CD4-positive, alpha-beta T cell (primary cell): ENCODE measurements at regions of chr3 and their contacts with region 1.

Region 1: GRCh38 chr3:49093853-49094767 is at the start of gene QRICH1:
- DNase-seq: peak; percentile 91 to 98 (median 94)
- ATAC-seq: peak; percentile 76
- H3K4me3 ChIP-seq: peak within 1 kb of the TSS; percentile 87
- H3K4me3 Mint-ChIP-seq: peak within 1 kb of the TSS; percentile 96
- H3K27ac ChIP-seq: peak within 1 kb of the TSS; percentile 74 to 93
- H3K27ac Mint-ChIP-seq: peak within 1 kb of the TSS; percentile 95
- H3K4me1 ChIP-seq: peaks cover 43% of the 10 kb centered on the region
- H3K4me1 Mint-ChIP-seq: peaks cover 46% of the 10 kb centered on the region
- H3K27me3 ChIP-seq: no peaks in the 10 kb centered on the region
- H3K27me3 Mint-ChIP-seq: no peaks in the 10 kb centered on the region
- CTCF ChIP-seq: peak; percentile 57
- total RNA-seq, gene QRICH1: 210 to 255 TPM

Region 2: GRCh38 chr3:48989796-48990635 is 104.1 kb before region 1 on chr3 and contains the start of gene P4HTM:
- CTCF ChIA-PET with region 1: interaction called, 28 read pairs
- POLR2A ChIA-PET with region 1: interaction called, 56 read pairs
- intact Hi-C with region 1: loop called (anchors 1 to 2 kb)
- DNase-seq: peak; percentile 45 to 88 (median 73)
- ATAC-seq: peak; percentile 60
- H3K4me3 ChIP-seq: peak within 1 kb of the TSS; percentile 81
- H3K4me3 Mint-ChIP-seq: peak within 1 kb of the TSS; percentile 96
- H3K27ac ChIP-seq: peak within 1 kb of the TSS; percentile 71 to 72
- H3K27ac Mint-ChIP-seq: peak within 1 kb of the TSS; percentile 94
- H3K4me1 ChIP-seq: peaks cover 48% of the 10 kb centered on the region
- H3K4me1 Mint-ChIP-seq: peaks cover 40% of the 10 kb centered on the region
- H3K27me3 ChIP-seq: no peaks in the 10 kb centered on the region
- H3K27me3 Mint-ChIP-seq: no peaks in the 10 kb centered on the region
- CTCF ChIP-seq: peak; percentile 39
- total RNA-seq, gene P4HTM: 45.9 to 47.0 TPM

Region 3: GRCh38 chr3:49028673-49029562 is 65.2 kb before region 1 on chr3 and contains the start of gene IMPDH2:
- CTCF ChIA-PET with region 1: interaction called, 8 read pairs
- POLR2A ChIA-PET with region 1: interaction called, 42 read pairs
- intact Hi-C with region 1: loop called (anchors 2 to 5 kb)
- DNase-seq: peak; percentile 86 to 98 (median 92)
- ATAC-seq: peak; percentile 96
- H3K4me3 ChIP-seq: peak within 1 kb of the TSS; percentile 82
- H3K4me3 Mint-ChIP-seq: peak within 1 kb of the TSS; percentile 88
- H3K27ac ChIP-seq: peak within 1 kb of the TSS; percentile 87 to 94
- H3K27ac Mint-ChIP-seq: peak within 1 kb of the TSS; percentile 93
- H3K4me1 ChIP-seq: peaks cover 36% of the 10 kb centered on the region
- H3K4me1 Mint-ChIP-seq: peaks cover 31% of the 10 kb centered on the region
- H3K27me3 ChIP-seq: no peaks in the 10 kb centered on the region
- H3K27me3 Mint-ChIP-seq: no peaks in the 10 kb centered on the region
- CTCF ChIP-seq: no peak
- total RNA-seq, gene IMPDH2: 133 to 135 TPM

Region 4: DNA sequence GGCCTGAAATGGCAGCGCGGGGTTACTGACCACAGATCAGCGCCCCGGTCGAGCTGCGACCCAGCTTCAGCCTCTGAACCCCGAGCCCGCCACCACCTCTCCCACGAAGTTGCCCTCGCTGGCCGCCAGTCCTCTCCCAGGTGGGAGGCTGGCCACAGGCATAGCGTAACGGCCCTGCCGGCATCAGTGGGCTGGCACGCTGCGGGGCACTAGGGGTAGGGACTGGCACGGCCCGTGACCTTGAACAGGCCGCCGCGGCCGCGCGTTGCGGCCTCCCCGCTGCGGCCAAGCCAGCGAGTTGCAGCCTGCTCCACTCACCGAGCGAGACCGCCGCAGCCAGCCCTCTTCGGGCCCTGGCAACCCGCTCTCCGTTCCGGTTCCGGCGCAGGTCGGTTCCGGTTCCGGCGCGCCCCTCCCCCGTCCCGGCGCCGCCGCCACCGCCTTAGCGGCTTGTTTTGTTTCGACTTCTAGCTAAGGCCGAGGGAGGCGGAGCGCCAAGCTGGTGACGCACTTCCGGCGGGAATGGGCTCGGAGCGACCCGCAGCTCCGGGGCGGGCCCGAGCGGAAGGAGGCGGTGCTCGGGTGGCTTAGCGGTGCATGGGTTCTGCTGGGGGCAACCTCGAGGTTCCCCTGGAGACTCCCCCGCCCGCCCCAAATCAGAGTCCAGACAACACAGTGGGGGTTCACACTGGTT is 26.5 kb after region 1 on chr3 and contains the start of gene USP19:
- CTCF ChIA-PET with region 1: interaction called, 27 read pairs
- POLR2A ChIA-PET with region 1: interaction called, 92 read pairs
- intact Hi-C with region 1: loop called in 1 of 2 experiments (anchors 2 kb)
- DNase-seq: peak; percentile 86 to 98 (median 94)
- ATAC-seq: peak; percentile 91
- H3K4me3 ChIP-seq: peak within 1 kb of the TSS; percentile 99
- H3K4me3 Mint-ChIP-seq: peak within 1 kb of the TSS; percentile 93
- H3K27ac ChIP-seq: peak within 1 kb of the TSS; percentile 87 to 95
- H3K27ac Mint-ChIP-seq: peak within 1 kb of the TSS; percentile 95
- H3K4me1 ChIP-seq: peaks cover 30% of the 10 kb centered on the region
- H3K4me1 Mint-ChIP-seq: peaks cover 23% of the 10 kb centered on the region
- H3K27me3 ChIP-seq: no peaks in the 10 kb centered on the region
- H3K27me3 Mint-ChIP-seq: no peaks in the 10 kb centered on the region
- CTCF ChIP-seq: no peak
- total RNA-seq, gene USP19: 84.9 to 86.2 TPM

Region 5: GRCh38 chr3:49171119-49171774 is 77.1 kb after region 1 on chr3 and contains the start of gene KLHDC8B:
- CTCF ChIA-PET with region 1: interaction called, 6 read pairs
- POLR2A ChIA-PET with region 1: interaction called, 20 read pairs
- intact Hi-C with region 1: loop called in 1 of 2 experiments (anchors 1 kb)
- DNase-seq: peak; percentile 66 to 87 (median 77)
- ATAC-seq: peak; percentile 84
- H3K4me3 ChIP-seq: peak within 1 kb of the TSS; percentile 80
- H3K4me3 Mint-ChIP-seq: peak within 1 kb of the TSS; percentile 89
- H3K27ac ChIP-seq: no peak within 1 kb of the TSS
- H3K27ac Mint-ChIP-seq: peak within 1 kb of the TSS; percentile 78
- H3K4me1 ChIP-seq: peaks cover 34% of the 10 kb centered on the region
- H3K4me1 Mint-ChIP-seq: peaks cover 33% of the 10 kb centered on the region
- H3K27me3 ChIP-seq: no peaks in the 10 kb centered on the region
- H3K27me3 Mint-ChIP-seq: no peaks in the 10 kb centered on the region
- CTCF ChIP-seq: peak; percentile 87
- total RNA-seq, gene KLHDC8B: 1.2 to 1.6 TPM

Region 6: DNA sequence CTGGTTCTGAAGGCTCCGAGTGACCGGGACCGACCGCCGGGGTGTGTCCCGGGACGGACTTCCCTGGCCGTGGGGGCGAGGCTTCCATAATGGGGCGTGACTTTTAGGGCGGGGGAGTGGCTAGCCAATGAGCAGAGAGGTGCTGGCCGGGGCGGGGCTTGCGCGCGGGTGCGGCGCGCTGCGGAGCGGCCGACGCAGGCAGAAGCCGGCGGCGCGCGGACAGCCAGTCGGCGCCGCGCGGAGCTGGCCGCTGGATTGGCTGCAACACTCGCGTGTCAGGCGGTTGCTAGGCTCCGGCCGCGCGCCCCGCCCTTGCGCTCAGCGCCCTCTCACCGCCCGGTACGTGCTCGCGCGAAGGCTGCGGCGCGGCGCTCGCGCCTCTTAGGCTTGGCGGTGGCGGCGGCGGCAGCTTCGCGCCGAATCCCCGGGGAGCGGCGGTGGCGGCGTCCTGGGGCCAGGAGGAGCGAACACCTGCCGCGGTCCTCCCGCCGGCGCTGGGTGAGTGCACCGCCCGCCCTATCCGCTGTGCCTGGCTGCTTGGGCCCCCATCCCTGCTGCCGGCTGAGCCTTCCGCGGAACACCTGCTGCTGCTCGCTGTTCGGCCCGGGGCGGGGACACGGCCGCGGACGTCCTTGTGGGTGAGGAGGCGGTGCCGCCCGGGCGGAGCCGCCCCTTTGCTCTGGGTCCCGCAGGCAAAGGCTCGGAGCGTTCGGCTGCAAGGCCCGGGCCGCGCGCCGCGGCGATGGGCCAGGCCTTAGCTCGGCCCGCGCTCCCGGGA is 376.0 kb after region 1 on chr3 and contains the start of gene DAG1:
- CTCF ChIA-PET with region 1: no interaction called
- POLR2A ChIA-PET with region 1: interaction called, 21 read pairs
- intact Hi-C with region 1: loop called in 1 of 2 experiments (anchors 5 kb)
- DNase-seq: peak; percentile 88 to 99 (median 94)
- ATAC-seq: peak; percentile 82
- H3K4me3 ChIP-seq: peak within 1 kb of the TSS; percentile 78
- H3K4me3 Mint-ChIP-seq: peak within 1 kb of the TSS; percentile 91
- H3K27ac ChIP-seq: peak within 1 kb of the TSS; percentile 86 to 88
- H3K27ac Mint-ChIP-seq: peak within 1 kb of the TSS; percentile 95
- H3K4me1 ChIP-seq: peaks cover 26% of the 10 kb centered on the region
- H3K4me1 Mint-ChIP-seq: peaks cover 23% of the 10 kb centered on the region
- H3K27me3 ChIP-seq: no peaks in the 10 kb centered on the region
- H3K27me3 Mint-ChIP-seq: no peaks in the 10 kb centered on the region
- CTCF ChIP-seq: no peak
- total RNA-seq, gene DAG1: 15.0 to 18.3 TPM